Common myeloid progenitor, CD34-positive (primary cell): ENCODE measurements at regions of chr15 and their contacts with region 1.

Region 1: DNA sequence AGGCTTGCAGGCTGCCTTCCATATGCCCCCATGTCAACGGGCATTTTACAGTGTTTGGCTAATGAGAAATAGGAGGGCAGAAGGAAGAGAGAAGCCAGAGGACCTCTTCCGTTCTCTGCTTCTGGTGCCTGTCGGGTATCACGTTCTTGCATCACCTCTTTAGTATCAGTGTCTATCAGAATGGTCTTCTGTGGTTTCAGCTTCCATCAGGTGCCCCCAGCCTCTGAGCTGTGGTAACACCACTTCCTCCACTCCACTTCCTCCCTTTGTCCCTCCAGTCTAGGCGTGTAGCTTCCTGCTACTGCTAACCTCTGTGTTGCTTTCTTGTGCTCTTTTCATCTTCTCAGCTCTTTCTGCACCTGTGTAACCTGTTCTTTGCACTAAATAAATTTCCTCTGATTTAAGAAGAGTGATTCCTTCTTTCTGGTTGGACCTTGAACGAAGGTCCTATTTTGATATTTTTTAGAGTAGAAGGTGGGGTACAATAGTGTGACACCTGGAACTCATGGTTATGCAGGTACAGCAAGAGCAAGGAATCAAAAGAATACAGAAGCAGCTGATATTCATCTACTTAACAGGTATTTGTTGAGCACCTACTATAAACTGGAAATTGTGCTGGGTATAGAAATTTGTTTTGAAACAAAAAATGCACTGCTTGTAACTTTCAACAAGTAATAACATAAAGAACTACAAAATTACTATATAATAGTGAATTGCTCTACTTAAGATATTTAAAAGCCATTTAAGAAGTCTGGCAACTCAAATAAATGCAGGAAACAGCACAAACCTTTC is 27.4 kb upstream of the FOXB1 start:
- DNase-seq: peak; percentile 93 to 98 (median 95)
- H3K4me3 ChIP-seq: peak overlapping the region in 2 of 7 experiments; percentile 28 to 43
- H3K27ac ChIP-seq: no peak overlapping the region
- H3K4me1 ChIP-seq: peaks cover 28 to 44% (median 36%) of the 10 kb centered on the region in 4 experiments
- H3K27me3 ChIP-seq: no peaks in the 10 kb centered on the region

Region 2: DNA sequence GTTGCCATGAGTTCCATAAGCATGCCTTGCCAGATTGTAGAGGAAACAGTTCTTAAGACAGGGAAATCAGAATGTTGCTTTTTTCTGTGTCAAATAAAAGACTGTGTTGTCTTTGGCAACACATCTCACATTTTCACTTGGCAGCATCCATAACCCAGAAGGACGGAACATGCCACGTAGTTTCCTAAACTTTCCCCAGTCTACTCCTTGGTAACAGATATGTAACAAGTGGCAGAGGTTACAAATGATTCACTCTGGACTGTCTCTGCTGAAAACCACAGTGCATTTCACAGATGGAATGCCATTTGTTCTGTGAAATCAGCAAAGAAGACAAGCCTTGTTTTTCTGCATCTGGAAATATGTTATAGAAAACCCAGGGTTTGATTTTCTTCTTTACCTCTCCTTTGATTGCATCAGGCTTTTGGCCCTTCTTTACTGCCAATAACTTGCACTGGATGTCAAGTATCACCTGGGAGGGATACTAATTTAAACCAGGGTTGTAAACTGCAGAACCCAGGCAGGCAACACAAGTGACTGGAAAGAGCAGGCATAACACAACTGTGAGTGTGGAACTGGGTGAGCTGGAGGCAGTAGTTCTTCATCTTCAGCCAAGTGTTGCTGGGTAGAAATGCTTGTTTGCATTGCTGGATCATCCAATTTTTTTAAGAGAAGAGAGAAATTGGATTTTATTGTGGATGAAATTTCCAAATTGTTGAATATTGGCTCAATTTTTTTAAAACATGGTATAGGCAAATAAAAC is 97.0 kb before region 1 on chr15:
- CTCF ChIA-PET with region 1: no interaction called
- POLR2A ChIA-PET with region 1: no interaction called
- DNase-seq: no peak
- H3K4me3 ChIP-seq: no peak overlapping the region
- H3K27ac ChIP-seq: no peak overlapping the region
- H3K4me1 ChIP-seq: no peaks in the 10 kb centered on the region
- H3K27me3 ChIP-seq: peaks cover 0 to 4% (median 0%) of the 10 kb centered on the region in 5 experiments

Region 3: DNA sequence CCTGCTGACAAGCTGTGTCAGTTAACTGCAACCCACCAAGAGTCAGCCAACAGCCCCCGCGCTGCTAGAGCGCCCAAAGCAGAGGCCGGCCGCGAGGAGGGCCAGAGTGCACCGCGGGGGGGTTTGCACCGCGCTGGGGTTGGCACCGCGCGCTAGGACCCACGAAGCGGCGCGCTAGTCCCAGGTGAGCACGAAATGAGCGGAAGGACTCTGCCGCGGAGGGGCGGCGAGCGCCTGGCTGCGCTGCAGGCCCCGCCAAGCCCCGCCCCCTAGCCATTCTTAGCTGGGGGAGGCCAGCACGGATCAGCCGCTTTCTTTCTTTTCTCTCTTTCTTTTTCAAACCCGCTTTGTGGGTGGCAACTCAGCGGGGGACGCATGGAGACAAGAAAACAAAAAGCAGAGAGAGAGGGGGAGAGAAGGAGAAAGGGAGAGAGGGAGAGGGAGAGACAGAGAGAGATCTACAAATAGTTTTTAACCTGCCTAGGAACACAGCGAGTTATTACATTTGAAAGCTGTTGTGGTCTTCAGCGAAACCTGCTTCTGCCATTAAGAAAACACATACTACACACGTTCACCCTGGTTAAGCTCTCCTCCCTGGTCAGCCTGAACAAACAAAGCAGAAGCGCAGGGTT is 20.5 kb after region 1 on chr15:
- CTCF ChIA-PET with region 1: interaction called, 14 read pairs
- POLR2A ChIA-PET with region 1: interaction called, 4 read pairs
- DNase-seq: peak in 1 of 3 donors; percentile 54
- H3K4me3 ChIP-seq: peak overlapping the region in 3 of 7 experiments; percentile 11 to 51 (median 17)
- H3K27ac ChIP-seq: no peak overlapping the region
- H3K4me1 ChIP-seq: peaks cover 2 to 42% (median 27%) of the 10 kb centered on the region in 4 experiments
- H3K27me3 ChIP-seq: peaks cover 22 to 96% (median 72%) of the 10 kb centered on the region in 5 experiments